GM10248 (cell line): ENCODE measurements at regions of chr4 and their contacts with region 1.

Region 1: GRCh38 chr4:11428899-11429698 is 405 bp upstream of the HS3ST1 start:
- DNase-seq: peak; percentile 62
- CTCF ChIP-seq: peak; percentile 81

Region 2: GRCh38 chr4:11470438-11471045 is 41.4 kb after region 1 on chr4:
- CTCF ChIA-PET with region 1: interaction called, 5 read pairs
- POLR2A ChIA-PET with region 1: interaction called, 11 read pairs
- DNase-seq: peak; percentile 12
- CTCF ChIP-seq: no peak